Endothelial cell of umbilical vein (primary cell): ENCODE measurements at regions of chr9 and their contacts with region 1.

Region 1: DNA sequence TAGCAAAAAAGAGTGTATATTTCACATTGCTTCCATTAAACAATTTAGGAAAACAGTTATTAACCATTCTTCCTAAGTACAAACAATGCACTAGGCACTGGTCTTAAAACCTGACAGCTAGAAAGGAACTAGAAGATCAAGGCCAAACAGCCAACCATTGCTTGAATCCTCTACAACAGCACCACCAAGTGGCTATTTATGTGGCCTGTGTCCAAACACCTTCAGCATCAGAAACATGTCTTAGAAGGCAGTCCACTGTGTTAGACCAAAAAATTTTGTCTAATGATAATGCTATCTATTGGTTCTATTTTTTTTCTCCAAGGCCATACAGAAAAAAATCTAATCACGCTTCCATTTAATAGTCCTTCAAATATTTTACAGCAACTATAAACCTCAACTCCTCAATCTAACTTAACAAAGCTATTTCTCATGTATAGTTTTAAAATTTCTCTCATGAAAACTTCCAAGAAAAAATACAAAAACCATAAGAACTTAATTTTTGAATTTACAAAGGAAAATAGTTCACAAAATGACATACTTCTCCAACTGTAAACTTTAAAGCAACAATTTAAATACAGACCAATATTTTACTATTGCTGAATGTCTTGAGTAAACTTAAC is 36.1 kb downstream of the CAAP1 start:
- DNase-seq: peak; percentile 21
- H3K4me3 ChIP-seq: no peak overlapping the region
- H3K27ac ChIP-seq: no peak overlapping the region
- H3K4me1 ChIP-seq: no peaks in the 10 kb centered on the region
- H3K27me3 ChIP-seq: no peaks in the 10 kb centered on the region
- CTCF ChIP-seq: peak; percentile 43 to 48
- POLR2A ChIP-seq: no peak

Region 2: DNA sequence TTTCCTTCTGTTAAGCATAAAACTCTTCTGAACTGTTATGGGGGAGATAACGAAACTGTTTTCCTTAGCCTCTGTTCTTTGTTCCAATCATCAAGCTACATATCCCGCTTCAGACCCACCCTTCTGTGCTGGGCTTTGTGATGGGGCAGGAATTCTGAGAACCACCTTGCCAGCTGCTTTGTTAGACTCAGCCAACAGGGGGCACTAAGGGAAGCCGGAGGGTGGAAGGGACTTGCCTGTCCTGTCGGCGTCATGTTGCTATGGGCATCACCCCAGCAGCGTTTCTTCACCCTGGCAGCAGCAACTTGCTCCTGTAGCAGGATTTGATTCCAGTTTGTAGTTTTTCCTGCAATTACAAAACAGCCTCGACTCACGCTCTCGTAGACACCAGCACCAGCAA is 133.0 kb before region 1 on chr9:
- CTCF ChIA-PET with region 1: no interaction called
- POLR2A ChIA-PET with region 1: no interaction called
- dilution Hi-C with region 1: no loop called
- intact Hi-C with region 1: loop called (anchors 1 kb)
- DNase-seq: no peak
- H3K4me3 ChIP-seq: no peak overlapping the region
- H3K27ac ChIP-seq: no peak overlapping the region
- H3K4me1 ChIP-seq: no peaks in the 10 kb centered on the region
- H3K27me3 ChIP-seq: peaks cover 0 to 5% of the 10 kb centered on the region in 2 experiments
- CTCF ChIP-seq: peak; percentile 23 to 29
- POLR2A ChIP-seq: no peak

Region 3: GRCh38 chr9:26975693-26976059 is 119.2 kb after region 1 on chr9:
- CTCF ChIA-PET with region 1: no interaction called
- POLR2A ChIA-PET with region 1: no interaction called
- dilution Hi-C with region 1: no loop called
- intact Hi-C with region 1: no loop called
- DNase-seq: peak; percentile 42
- H3K4me3 ChIP-seq: no peak overlapping the region
- H3K27ac ChIP-seq: no peak overlapping the region
- H3K4me1 ChIP-seq: no peaks in the 10 kb centered on the region
- H3K27me3 ChIP-seq: no peaks in the 10 kb centered on the region
- CTCF ChIP-seq: peak; percentile 34 to 51
- POLR2A ChIP-seq: no peak